Activated CD8-positive, alpha-beta T cell treated with anti-CD3 and anti-CD28 coated beads for 36 hours (primary cell): ENCODE measurements at regions of chr4 and their contacts with region 1.

Region 1: DNA sequence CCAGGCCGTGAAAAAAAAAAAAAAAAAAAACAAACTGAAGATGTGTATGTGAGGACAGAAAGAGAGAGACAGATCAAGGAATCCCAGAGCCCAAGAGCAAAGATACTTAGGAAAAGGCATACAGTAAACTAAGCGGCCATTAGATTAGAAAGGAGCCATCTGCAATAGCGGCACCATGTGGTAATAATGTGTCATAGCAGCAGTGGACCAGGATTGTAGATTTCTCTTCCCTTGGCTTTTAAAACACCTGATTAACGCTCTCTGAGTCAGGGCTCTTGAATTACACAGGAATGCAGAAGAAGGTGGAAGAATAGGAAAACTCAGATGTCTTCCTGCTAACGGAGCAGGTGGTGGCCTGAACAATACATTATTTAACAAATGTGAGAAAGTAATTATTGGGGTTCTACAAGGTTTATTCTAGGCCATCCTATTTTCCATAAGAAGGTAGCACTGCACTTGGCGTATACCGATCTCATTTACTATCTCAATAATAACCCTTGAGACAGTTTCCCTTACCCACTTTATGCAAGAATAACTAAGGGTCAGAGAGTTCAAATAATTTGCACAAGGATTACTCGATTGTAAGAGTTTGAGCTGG is 182.7 kb downstream of the KCNIP4 start:
- DNase-seq: peak; percentile 54
- ATAC-seq: peak; percentile 61
- H3K4me3 Mint-ChIP-seq: no peak overlapping the region
- H3K27ac Mint-ChIP-seq: no peak overlapping the region
- H3K4me1 Mint-ChIP-seq: peaks cover 8% of the 10 kb centered on the region
- H3K27me3 Mint-ChIP-seq: peaks cover 13% of the 10 kb centered on the region
- CTCF ChIP-seq: peak; percentile 64

Region 2: GRCh38 chr4:20422398-20422797 is 1343.5 kb before region 1 on chr4:
- CTCF ChIA-PET with region 1: no interaction called
- POLR2A ChIA-PET with region 1: no interaction called
- intact Hi-C with region 1: loop called (anchors 10 kb)
- DNase-seq: peak; percentile 54
- ATAC-seq: peak; percentile 83
- H3K4me3 Mint-ChIP-seq: no peak overlapping the region
- H3K27ac Mint-ChIP-seq: no peak overlapping the region
- H3K4me1 Mint-ChIP-seq: peaks cover 4% of the 10 kb centered on the region
- H3K27me3 Mint-ChIP-seq: peaks cover 2% of the 10 kb centered on the region
- CTCF ChIP-seq: peak; percentile 69

Region 3: GRCh38 chr4:21512353-21512752 is 253.6 kb before region 1 on chr4:
- CTCF ChIA-PET with region 1: interaction called, 9 read pairs
- POLR2A ChIA-PET with region 1: no interaction called
- intact Hi-C with region 1: loop called (anchors 5 kb)
- DNase-seq: no peak
- ATAC-seq: no peak
- H3K4me3 Mint-ChIP-seq: no peak overlapping the region
- H3K27ac Mint-ChIP-seq: no peak overlapping the region
- H3K4me1 Mint-ChIP-seq: no peaks in the 10 kb centered on the region
- H3K27me3 Mint-ChIP-seq: no peaks in the 10 kb centered on the region
- CTCF ChIP-seq: no peak